Motor neuron (in vitro differentiated cells): ENCODE measurements at regions of chr4 and their contacts with region 1.

Region 1: GRCh38 chr4:128454281-128455075 is 166.9 kb upstream of the PGRMC2 start:
- ATAC-seq: peak; percentile 93 to 99 (median 98)
- H3K4me3 ChIP-seq: no peak overlapping the region
- H3K27ac ChIP-seq: no peak overlapping the region
- H3K4me1 ChIP-seq: peaks cover 11 to 30% of the 10 kb centered on the region in 2 donors

Region 2: DNA sequence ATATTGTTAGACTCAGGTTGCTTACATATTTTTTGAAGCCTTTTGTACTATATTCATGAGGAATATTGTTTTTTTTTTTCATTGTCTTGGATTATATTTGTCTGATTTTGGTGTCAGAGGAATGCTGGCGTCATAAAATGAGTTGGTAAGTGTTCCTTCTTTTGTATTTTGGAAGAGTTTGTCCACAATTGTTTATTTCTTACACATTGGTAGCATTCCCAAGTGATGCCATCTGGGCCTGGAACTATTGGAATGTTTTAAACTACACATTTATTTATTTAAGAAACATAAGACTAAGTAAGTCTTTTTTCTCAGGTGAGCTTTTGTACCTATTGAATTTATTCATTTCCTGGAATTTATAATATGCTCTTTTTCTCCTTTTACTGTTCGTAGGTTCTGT is 285.8 kb before region 1 on chr4:
- in situ Hi-C with region 1: no loop called
- ATAC-seq: no peak
- H3K4me3 ChIP-seq: no peak overlapping the region
- H3K27ac ChIP-seq: no peak overlapping the region
- H3K4me1 ChIP-seq: no peaks in the 10 kb centered on the region

Region 3: GRCh38 chr4:128558896-128559679 is 104.6 kb after region 1 on chr4:
- in situ Hi-C with region 1: loop called in 1 of 9 experiments (anchors 10 kb)
- ATAC-seq: peak in 6 of 8 experiments; percentile 32 to 93 (median 68)
- H3K4me3 ChIP-seq: no peak overlapping the region
- H3K27ac ChIP-seq: peak overlapping the region in 1 of 2 donors; percentile 27
- H3K4me1 ChIP-seq: peaks cover 6 to 10% of the 10 kb centered on the region in 2 donors

Region 4: DNA sequence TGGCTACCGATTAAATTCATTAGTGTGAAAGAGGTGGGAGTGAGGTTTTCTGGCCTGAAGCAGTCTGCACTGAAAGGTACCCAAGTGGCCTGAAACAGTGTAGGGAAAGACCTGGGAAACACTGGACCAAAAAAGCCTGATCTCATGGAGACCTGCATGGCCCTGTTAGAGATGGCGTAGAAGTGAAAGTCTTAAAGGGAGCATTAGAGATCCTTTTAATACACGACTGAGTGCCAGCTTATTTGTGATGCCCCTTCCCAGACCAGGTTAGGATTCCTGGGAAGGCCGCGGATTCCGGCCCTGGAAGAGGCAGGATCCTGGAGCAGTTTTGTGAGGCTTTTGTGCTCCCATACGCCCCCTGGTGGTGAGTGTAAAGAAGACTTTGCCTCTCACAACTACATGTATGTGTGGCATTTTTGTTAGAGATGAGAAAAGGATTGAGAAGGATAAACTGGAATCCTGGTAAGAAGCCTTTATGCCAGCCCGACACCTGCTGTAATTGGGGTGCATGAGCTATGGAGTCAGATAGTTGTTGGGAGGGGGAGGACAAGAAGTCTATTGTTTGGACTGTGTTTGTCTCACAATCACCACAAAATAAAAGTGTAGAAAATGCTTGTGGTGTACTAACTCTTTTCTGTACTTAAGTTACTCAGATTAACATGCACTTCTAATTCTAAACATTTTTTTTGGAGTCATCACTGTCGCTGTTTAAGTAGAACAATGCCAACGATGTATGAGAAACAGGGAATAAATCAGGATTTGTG is 409.0 kb after region 1 on chr4:
- in situ Hi-C with region 1: loop called in 1 of 9 experiments (anchors 25 kb)
- ATAC-seq: peak; percentile 12 to 87 (median 76)
- H3K4me3 ChIP-seq: no peak overlapping the region
- H3K27ac ChIP-seq: peak overlapping the region in 1 of 2 donors; percentile 8
- H3K4me1 ChIP-seq: peaks cover 0 to 2% of the 10 kb centered on the region in 2 donors